ENCODE measurements at regions of chr14 and their contacts with region 1.

Region 1: DNA sequence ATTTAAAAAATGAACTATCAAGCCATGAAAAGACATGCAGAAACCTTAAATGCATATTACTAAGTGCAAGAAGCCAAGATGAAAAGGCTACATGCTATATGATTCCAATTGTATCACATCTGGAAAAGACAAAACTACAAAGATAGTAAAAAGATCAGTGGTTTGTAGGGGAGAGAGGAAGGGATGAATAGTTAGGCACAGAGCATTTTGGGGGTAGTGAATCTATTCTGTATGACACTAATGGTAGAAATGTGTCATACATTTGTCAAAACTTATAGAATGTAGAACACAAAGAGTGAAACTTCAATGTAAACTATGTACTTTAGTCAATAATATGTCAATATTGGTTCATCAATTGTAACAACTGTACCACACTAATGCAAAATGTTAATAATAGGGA is 20.8 kb downstream of the TXNDC16 start:
- DNase-seq: no peak
- ATAC-seq: peak in 1 of 4 experiments; percentile 42
- H3K4me3 ChIP-seq: no peak overlapping the region
- H3K4me3 Mint-ChIP-seq: no peak overlapping the region
- H3K27ac ChIP-seq: no peak overlapping the region
- H3K27ac Mint-ChIP-seq: no peak overlapping the region
- H3K4me1 ChIP-seq: no peaks in the 10 kb centered on the region
- H3K4me1 Mint-ChIP-seq: no peaks in the 10 kb centered on the region
- H3K27me3 ChIP-seq: no peaks in the 10 kb centered on the region
- H3K27me3 Mint-ChIP-seq: no peaks in the 10 kb centered on the region

Region 2: GRCh38 chr14:52834440-52834842 is 303.0 kb after region 1 on chr14:
- CTCF ChIA-PET with region 1: interaction called in 1 of 2 experiments, 10 read pairs
- POLR2A ChIA-PET with region 1: no interaction called
- DNase-seq: no peak
- ATAC-seq: no peak
- H3K4me3 ChIP-seq: no peak overlapping the region
- H3K4me3 Mint-ChIP-seq: no peak overlapping the region
- H3K27ac ChIP-seq: no peak overlapping the region
- H3K27ac Mint-ChIP-seq: no peak overlapping the region
- H3K4me1 ChIP-seq: no peaks in the 10 kb centered on the region
- H3K4me1 Mint-ChIP-seq: no peaks in the 10 kb centered on the region
- H3K27me3 ChIP-seq: peaks cover 0 to 3% of the 10 kb centered on the region in 2 experiments
- H3K27me3 Mint-ChIP-seq: no peaks in the 10 kb centered on the region